HCT116 (cell line): ENCODE measurements at regions of chr11 and their contacts with region 1.

Region 1: DNA sequence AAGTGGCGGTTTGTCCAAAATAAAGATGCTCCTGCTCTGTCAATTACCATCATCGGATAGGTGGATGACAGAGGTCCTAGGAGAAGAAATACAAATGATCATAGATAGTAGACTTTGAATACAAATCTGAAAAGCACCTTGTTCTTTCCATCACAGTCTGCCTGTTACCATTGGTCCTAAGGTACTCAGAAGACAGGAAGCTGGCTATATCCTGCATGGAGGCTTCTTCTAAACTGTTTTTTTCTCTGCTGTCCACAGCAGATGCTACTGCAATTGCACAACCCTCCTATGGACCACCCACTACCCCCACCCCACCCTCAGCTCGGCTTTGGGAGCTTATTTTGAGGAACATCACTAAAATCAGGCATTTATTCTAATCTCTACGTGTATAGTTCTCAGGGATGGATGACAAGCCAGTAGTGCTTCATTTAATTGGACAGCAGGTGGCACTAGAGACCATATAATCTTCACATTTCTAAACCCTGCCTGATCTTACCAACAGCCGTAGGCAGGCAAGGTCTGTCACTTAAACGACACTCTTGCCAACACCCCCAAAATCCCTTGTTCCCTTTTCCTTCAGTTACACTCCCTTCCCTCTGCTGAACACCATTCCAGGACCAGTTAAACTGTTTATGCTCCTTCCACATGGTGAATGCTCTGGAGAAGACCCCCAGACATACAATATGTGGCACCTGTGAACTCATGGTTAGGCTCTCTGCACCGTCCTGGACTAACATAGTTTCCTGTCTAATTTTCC is 6.6 kb upstream of the PTS start:
- DNase-seq: peak; percentile 71
- ATAC-seq: peak; percentile 100
- H3K4me3 ChIP-seq: no peak overlapping the region
- H3K27ac ChIP-seq: no peak overlapping the region
- H3K4me1 ChIP-seq: no peaks in the 10 kb centered on the region
- H3K27me3 ChIP-seq: no peaks in the 10 kb centered on the region
- CTCF ChIP-seq: peak; percentile 57 to 85 (median 77)
- POLR2A ChIP-seq: no peak
- RAD21 ChIP-seq: peak; percentile 93

Region 2: DNA sequence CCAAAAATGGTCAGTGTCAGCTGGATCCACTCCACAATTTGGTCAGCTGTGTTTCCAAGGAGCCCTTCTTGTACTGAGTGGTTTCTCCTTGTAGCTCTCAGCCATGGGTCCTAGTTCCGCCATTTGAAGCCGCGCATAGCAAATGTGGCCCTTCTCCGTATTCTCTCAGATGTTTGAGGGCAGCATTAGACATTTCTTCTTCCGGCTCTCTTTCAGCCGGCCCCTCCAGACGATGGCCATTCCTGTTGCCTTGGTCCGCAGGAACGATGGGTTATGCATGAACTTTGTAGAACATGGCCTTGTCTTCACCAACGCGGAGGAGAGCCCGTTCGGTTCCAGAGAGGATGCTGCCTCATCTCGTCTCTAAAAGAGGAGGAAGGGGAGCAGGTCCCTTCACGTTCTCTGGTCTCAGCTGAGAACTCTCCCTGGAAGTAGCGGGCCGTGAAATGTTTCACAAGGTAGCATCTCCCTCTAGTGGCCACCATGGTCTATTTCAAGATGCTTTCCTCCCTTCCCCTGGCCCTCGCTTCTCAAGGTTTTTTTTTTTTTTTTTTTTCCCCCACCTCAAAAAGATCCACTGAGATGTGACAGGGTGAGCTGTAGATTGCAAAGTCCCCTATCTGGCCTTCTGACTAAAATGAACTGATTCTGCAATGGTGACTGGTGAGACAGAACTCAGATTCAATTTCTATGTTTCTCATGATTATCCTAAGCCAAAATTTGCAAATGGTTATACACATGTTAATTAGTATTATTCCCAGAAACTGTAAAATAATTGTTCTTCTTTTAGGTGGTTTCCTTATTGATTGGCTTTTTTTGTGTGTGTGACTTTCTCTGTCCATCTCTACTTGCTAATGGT is 60.8 kb after region 1 on chr11:
- CTCF ChIA-PET with region 1: interaction called, 73 read pairs
- POLR2A ChIA-PET with region 1: no interaction called
- RAD21 ChIA-PET with region 1: interaction called in 1 of 2 experiments, 7 read pairs
- intact Hi-C with region 1: loop called (anchors 1 kb)
- DNase-seq: peak; percentile 65
- ATAC-seq: peak; percentile 87
- H3K4me3 ChIP-seq: no peak overlapping the region
- H3K27ac ChIP-seq: no peak overlapping the region
- H3K4me1 ChIP-seq: peaks cover 0 to 5% of the 10 kb centered on the region in 2 experiments; a peak in 2 of 4 replicates
- H3K27me3 ChIP-seq: no peaks in the 10 kb centered on the region
- CTCF ChIP-seq: peak; percentile 74 to 77 (median 74); a peak in 5 of 6 replicates
- POLR2A ChIP-seq: no peak
- RAD21 ChIP-seq: peak; percentile 75

Region 3: DNA sequence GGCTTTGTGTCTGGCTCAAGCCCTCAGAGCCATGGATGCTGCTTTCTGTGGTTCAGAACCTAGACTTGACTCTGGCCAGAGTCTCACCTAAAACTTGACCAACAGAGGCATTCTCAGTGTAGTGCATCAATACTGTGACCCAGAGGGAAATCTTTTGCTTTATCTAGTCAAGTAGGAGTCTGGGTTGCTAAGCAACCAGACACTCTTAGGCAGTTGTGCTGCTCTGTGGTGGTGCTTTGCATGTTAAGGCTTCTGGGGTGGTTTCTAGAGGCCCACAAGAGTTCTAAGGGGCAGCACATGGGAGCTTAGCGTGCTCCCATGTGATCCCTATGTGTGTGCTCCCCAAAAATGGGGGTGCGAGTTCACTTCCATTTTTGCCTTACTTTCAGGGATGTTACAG is 265.6 kb after region 1 on chr11:
- CTCF ChIA-PET with region 1: no interaction called
- POLR2A ChIA-PET with region 1: no interaction called
- RAD21 ChIA-PET with region 1: no interaction called
- intact Hi-C with region 1: no loop called
- DNase-seq: no peak
- ATAC-seq: no peak
- H3K4me3 ChIP-seq: no peak overlapping the region
- H3K27ac ChIP-seq: no peak overlapping the region
- H3K4me1 ChIP-seq: no peaks in the 10 kb centered on the region
- H3K27me3 ChIP-seq: peaks cover 52% of the 10 kb centered on the region
- CTCF ChIP-seq: no peak
- POLR2A ChIP-seq: no peak
- RAD21 ChIP-seq: no peak

Region 4: DNA sequence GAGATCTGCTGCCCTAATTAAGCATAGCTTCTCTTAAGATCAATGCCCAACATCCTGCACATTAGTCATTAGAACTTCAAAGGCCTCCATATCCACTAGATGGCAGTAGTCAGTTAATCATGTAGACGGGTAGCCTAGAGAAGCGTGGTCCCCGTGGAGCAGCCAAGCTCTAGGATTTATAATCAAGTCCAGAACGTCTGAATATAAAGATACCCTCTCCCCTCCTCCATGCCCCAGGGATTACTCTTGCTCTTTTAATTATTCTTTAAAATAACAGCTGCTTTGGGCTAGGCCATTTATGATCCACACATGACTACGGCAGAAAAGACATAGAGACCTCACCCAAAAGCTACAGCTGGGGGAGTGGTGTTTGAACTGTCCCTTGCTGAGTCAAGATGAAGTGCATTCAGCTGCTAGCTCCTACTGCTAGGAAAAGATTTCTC is 368.6 kb after region 1 on chr11:
- CTCF ChIA-PET with region 1: interaction called, 11 read pairs
- POLR2A ChIA-PET with region 1: no interaction called
- RAD21 ChIA-PET with region 1: no interaction called
- intact Hi-C with region 1: loop called (anchors 1 kb)
- DNase-seq: peak; percentile 83
- ATAC-seq: peak; percentile 94
- H3K4me3 ChIP-seq: no peak overlapping the region
- H3K27ac ChIP-seq: no peak overlapping the region
- H3K4me1 ChIP-seq: no peaks in the 10 kb centered on the region
- H3K27me3 ChIP-seq: 0 out of 2 replicates have a peak, but pooled peaks cover 4% of the 10 kb centered on the region
- CTCF ChIP-seq: peak; percentile 64 to 85 (median 81)
- POLR2A ChIP-seq: no peak
- RAD21 ChIP-seq: peak; percentile 93

Region 5: GRCh38 chr11:113113801-113114706 is 894.4 kb after region 1 on chr11:
- CTCF ChIA-PET with region 1: no interaction called
- POLR2A ChIA-PET with region 1: no interaction called
- RAD21 ChIA-PET with region 1: no interaction called
- intact Hi-C with region 1: loop called (anchors 5 kb)
- DNase-seq: no peak
- ATAC-seq: peak; percentile 98
- H3K4me3 ChIP-seq: no peak overlapping the region
- H3K27ac ChIP-seq: no peak overlapping the region
- H3K4me1 ChIP-seq: no peaks in the 10 kb centered on the region
- H3K27me3 ChIP-seq: peaks cover 41% of the 10 kb centered on the region; the same call in 1 of the 2 replicates
- CTCF ChIP-seq: peak; percentile 35 to 66 (median 58); a peak in 4 of 6 replicates
- POLR2A ChIP-seq: no peak
- RAD21 ChIP-seq: peak; percentile 63

Region 6: DNA sequence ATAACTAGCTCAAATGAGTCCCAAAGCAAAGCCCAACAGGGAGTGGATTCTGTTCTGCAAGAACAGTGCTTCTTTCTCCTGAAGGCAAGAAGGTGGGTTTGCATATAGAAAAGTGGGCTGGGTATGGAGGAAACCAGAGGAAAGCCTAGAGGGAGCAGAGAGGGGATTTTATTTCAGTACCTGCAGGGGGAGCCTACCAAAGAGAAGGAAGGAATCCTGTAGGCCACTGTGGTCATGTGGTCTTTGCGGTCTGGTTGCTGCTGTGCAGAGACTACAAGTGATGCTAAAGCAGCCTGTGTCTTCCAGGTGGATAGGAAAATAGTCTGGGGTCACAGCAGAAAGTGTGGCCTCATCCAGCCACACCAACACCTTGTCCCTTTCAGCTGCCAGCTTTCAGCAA is 1806.7 kb after region 1 on chr11:
- CTCF ChIA-PET with region 1: no interaction called
- POLR2A ChIA-PET with region 1: no interaction called
- RAD21 ChIA-PET with region 1: no interaction called
- intact Hi-C with region 1: no loop called
- DNase-seq: no peak
- ATAC-seq: peak; percentile 93
- H3K4me3 ChIP-seq: no peak overlapping the region
- H3K27ac ChIP-seq: no peak overlapping the region
- H3K4me1 ChIP-seq: no peaks in the 10 kb centered on the region
- H3K27me3 ChIP-seq: peaks cover 41% of the 10 kb centered on the region
- CTCF ChIP-seq: peak in 2 of 3 experiments; percentile 31 to 42; a peak in 4 of 6 replicates
- POLR2A ChIP-seq: no peak
- RAD21 ChIP-seq: no peak